GM10248 (cell line): ENCODE measurements at regions of chr2 and their contacts with region 1.

Region 1: GRCh38 chr2:68709421-68709911 is 25.1 kb upstream of the ARHGAP25 start:
- DNase-seq: no peak
- CTCF ChIP-seq: peak; percentile 50

Region 2: GRCh38 chr2:68487773-68488355 is 221.6 kb before region 1 on chr2:
- CTCF ChIA-PET with region 1: interaction called, 11 read pairs
- POLR2A ChIA-PET with region 1: no interaction called
- DNase-seq: peak; percentile 38
- CTCF ChIP-seq: peak; percentile 33

Region 3: DNA sequence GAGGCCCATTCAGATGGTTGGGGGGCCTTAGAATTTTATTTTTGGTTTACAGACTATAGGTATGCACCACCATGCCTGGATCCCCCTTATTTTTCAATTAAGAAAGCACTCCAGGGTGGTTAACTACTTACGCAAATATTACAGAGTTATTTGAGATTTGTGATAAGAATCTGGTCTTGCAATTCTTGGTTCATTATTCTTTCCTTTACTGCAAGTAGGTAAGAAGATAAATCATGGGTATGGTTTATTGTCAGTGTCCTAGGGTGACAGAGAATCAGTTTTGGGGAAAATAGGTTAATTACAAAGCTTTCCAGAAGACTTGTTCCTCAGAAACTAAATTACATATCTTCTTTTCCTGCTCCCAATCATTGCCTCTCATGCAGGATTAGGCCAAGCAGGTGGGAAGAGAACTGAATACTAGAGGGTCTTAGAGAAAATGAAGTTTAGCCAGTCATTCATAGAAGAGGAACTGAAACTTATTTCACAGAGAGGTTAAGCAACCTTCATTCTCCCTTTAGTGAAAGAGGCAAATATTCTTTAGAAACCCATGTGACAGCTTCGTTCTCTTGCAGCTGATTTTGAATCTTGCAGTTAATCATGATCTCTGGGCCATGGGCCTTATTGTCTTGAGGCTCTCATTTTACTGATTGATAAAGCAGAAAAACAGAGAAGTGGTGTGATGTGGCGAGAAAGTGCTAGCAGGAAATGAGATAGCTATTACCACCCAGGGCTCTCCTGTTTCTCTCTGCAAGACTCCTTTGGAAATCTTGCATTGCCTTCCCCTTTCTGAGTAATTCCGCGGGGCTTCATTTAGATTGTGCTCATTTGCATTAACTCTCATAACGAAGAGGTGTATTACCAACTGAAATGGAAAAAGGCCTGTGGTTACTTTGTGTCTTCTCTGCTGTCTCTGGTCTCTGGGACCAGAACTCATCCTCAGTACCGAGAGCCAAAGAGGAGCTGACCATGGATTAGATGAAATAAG is 19.6 kb before region 1 on chr2:
- CTCF ChIA-PET with region 1: interaction called, 54 read pairs
- POLR2A ChIA-PET with region 1: no interaction called
- DNase-seq: peak; percentile 68
- CTCF ChIP-seq: no peak

Region 4: GRCh38 chr2:68698567-68699377 is 10.7 kb before region 1 on chr2:
- CTCF ChIA-PET with region 1: interaction called, 54 read pairs
- POLR2A ChIA-PET with region 1: no interaction called
- DNase-seq: no peak
- CTCF ChIP-seq: no peak

Region 5: DNA sequence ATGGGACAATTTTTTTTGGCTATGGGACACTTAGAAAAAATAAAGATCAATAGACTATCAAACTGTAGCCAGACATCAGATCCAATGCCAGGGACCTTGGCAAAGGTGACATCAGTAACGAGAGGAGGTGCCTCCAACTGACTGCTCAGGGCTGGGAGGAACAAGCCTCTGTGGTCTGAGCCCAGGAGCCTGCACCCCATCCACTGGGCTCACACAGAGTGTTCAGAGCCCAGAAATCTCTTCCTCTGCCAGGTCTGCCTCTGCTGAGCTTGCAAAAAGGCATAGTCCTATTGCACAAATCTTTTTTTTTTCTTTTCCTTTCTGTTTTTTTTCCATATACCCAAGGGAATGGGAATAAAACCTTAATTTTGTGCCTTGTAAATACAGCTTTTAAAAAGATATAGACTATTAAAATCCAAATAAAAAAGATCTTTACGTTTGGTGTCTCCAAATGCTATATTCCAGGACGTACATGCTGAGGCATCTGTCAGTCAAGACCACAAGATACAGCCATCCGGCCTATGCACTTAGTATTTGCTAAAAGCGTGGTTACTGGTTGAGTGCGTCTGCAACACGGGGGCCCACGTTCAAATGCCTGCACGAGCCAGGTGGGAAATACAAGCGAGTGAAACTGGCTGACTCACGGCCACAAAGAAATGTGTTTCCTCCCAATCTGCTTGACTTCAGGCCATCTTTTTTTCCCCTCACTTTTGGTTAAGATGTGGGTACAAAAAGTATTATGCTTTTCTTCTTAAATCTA is 17.3 kb after region 1 on chr2:
- CTCF ChIA-PET with region 1: interaction called, 60 read pairs
- POLR2A ChIA-PET with region 1: no interaction called
- DNase-seq: peak; percentile 71
- CTCF ChIP-seq: no peak

Region 6: GRCh38 chr2:68734688-68735525 is 25.4 kb after region 1 on chr2 and contains the start of gene ARHGAP25:
- CTCF ChIA-PET with region 1: interaction called, 21 read pairs
- POLR2A ChIA-PET with region 1: no interaction called
- DNase-seq: peak; percentile 44
- CTCF ChIP-seq: peak; percentile 17

Region 7: GRCh38 chr2:68909793-68910674 is 200.6 kb after region 1 on chr2:
- CTCF ChIA-PET with region 1: interaction called, 36 read pairs
- POLR2A ChIA-PET with region 1: no interaction called
- DNase-seq: peak; percentile 70
- CTCF ChIP-seq: peak; percentile 90

Region 8: DNA sequence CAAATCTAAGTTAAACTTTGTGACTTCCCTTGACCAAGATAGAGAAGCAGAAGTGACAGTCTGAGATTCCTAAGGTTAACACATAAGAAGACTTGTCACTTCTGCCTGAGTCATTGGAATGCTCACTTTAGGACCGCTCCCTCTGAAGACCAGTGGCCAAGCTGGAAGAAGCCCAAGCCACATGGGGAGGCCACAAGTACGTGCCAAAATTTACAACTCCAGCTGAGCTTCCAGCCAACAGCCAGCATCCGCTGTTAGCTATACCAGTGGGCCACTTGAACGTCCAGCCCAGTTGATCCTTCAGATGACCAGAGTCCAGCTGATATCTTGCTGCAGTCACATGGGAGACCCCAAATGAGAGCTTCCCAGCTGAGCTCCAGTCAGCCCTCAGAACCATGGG is 285.4 kb after region 1 on chr2:
- CTCF ChIA-PET with region 1: no interaction called
- POLR2A ChIA-PET with region 1: no interaction called
- DNase-seq: no peak
- CTCF ChIP-seq: no peak